Activated B cell treated with CpG ODN at 0.5 μM for 24 hours (primary cell): ENCODE measurements at regions of chr2 and their contacts with region 1.

Region 1: DNA sequence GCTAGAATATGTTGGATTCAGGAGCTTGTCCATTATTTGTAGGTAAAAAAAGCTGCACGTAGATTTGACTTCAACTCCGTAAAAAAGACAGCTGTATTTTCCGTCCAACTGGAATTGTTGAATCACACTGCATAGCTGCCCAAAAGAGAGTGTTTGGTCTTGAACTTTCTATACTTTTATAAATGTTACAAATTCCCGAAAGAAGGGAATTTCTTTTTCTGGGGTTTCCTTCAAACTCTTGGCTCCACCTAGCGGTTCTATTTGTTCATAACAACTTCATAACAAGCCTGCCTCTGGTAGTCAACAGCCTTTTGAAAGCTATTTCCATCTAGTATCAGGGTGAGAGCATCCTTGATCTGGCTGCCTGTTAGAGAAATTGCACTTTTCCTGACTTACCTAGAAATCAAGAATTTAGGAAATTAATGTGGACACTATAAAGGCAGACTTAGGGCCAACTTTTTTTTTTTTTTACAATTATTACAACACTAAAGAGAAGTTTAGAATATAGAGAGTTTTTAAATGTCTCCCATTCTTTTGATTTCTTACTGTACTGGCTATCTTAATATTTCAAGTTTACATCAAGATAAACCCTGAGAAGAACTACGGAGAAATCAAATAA is 48.1 kb downstream of the TMEM185B start:
- DNase-seq: no peak
- ATAC-seq: no peak
- H3K4me3 Mint-ChIP-seq: no peak overlapping the region
- H3K27ac Mint-ChIP-seq: peak overlapping the region; percentile 47
- H3K4me1 Mint-ChIP-seq: peaks cover 50% of the 10 kb centered on the region
- H3K27me3 Mint-ChIP-seq: no peaks in the 10 kb centered on the region
- CTCF ChIP-seq: peak; percentile 98

Region 2: GRCh38 chr2:119641562-119642258 is 533.4 kb before region 1 on chr2:
- CTCF ChIA-PET with region 1: interaction called, 10 read pairs
- POLR2A ChIA-PET with region 1: no interaction called
- intact Hi-C with region 1: loop called (anchors 1 kb)
- DNase-seq: peak; percentile 55
- ATAC-seq: peak; percentile 100
- H3K4me3 Mint-ChIP-seq: no peak overlapping the region
- H3K27ac Mint-ChIP-seq: no peak overlapping the region
- H3K4me1 Mint-ChIP-seq: peaks cover 4% of the 10 kb centered on the region
- H3K27me3 Mint-ChIP-seq: peaks cover 10% of the 10 kb centered on the region
- CTCF ChIP-seq: peak; percentile 90

Region 3: DNA sequence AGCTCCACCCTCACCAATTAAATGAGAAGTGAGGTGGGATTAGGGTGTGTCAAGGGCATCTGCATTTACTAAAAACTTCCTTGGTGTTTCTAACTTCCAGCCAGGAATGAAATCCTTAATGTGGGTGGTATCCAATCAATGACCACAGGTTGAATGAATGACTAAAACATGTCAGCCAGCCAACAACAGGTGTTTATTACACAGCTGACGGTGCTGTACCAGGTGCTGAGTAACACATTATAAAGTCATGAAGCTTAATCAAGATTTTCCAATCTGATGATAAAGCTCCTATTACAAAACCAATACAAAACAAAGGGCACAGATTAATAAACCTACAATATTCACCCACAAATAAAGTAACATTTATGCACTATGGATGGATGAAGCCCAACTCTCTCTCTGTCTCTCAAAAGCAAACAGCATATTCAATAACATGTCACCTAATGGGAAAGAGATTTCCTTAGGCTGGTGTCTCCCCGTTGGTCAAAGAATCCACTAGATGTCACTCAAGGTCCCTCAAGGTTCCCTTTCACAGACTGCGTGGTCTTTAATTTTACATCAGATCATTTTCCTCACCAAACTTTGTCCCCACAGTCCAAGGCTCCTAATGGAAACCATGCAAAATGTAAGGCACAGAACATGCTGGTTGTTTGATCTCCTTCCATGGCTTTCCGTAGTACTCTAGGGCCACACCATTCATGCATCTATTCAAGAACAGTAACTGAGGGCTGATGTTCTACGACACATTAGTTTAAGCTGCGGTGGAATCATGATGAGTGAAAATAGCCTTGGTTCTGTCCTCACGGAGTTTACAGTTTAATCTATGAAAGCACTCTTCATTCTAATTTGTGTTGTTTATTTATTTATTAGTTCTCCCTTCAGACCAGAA is 421.8 kb before region 1 on chr2:
- CTCF ChIA-PET with region 1: interaction called, 138 read pairs
- POLR2A ChIA-PET with region 1: interaction called, 12 read pairs
- intact Hi-C with region 1: loop called (anchors 1 kb)
- DNase-seq: no peak
- ATAC-seq: peak; percentile 47
- H3K4me3 Mint-ChIP-seq: no peak overlapping the region
- H3K27ac Mint-ChIP-seq: no peak overlapping the region
- H3K4me1 Mint-ChIP-seq: no peaks in the 10 kb centered on the region
- H3K27me3 Mint-ChIP-seq: no peaks in the 10 kb centered on the region
- CTCF ChIP-seq: peak; percentile 42

Region 4: DNA sequence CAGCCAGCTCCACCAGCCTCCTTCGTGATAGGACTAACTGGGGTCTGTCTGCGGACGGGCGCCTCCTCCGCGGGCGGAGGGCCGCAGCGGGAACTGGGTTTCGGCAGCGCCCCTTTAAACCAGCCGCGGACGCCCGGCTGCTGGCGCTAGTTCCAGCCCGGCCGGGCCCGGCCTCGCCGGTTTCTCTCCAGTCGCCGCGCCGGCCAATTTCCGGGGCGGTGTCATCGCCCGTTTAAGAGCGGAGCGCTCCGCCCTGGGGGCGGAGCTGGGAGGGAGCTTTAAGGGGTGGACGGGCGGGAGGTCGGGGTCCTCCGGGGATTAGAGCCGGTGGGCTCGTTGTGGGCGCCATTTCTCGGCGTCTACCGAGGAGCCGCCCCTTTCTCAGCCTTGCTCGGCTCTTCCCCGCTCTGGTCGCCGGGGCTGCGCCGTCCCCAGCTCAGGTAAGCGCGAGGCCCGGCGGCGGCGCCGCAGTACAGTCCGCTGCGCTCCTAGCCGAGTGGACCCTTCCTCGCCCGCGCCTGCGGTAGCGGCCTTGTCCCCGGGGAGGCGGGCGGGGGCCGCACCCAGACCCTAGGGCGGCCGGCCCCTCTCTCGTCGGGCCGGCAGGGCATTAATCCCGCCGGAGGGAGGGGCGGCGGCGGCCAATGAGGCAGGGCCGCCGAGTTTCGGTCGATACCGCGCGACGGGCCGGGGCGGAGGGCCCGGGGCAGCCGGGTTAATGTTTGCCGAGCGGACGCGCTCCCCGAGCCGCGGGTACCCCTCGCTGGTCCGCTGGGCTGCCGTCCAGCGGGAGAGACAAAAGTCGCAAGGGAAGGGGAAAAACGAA is 162.1 kb before region 1 on chr2 and contains the start of gene EPB41L5:
- CTCF ChIA-PET with region 1: interaction called, 5 read pairs
- POLR2A ChIA-PET with region 1: interaction called, 14 read pairs
- intact Hi-C with region 1: loop called (anchors 1 kb)
- DNase-seq: peak; percentile 77
- ATAC-seq: peak; percentile 87
- H3K4me3 Mint-ChIP-seq: peak within 1 kb of the TSS; percentile 87
- H3K27ac Mint-ChIP-seq: peak within 1 kb of the TSS; percentile 79
- H3K4me1 Mint-ChIP-seq: peaks cover 32% of the 10 kb centered on the region
- H3K27me3 Mint-ChIP-seq: no peaks in the 10 kb centered on the region
- CTCF ChIP-seq: no peak
- total RNA-seq, gene EPB41L5: 20.9 and 29.4 TPM in 2 replicates

Region 5: DNA sequence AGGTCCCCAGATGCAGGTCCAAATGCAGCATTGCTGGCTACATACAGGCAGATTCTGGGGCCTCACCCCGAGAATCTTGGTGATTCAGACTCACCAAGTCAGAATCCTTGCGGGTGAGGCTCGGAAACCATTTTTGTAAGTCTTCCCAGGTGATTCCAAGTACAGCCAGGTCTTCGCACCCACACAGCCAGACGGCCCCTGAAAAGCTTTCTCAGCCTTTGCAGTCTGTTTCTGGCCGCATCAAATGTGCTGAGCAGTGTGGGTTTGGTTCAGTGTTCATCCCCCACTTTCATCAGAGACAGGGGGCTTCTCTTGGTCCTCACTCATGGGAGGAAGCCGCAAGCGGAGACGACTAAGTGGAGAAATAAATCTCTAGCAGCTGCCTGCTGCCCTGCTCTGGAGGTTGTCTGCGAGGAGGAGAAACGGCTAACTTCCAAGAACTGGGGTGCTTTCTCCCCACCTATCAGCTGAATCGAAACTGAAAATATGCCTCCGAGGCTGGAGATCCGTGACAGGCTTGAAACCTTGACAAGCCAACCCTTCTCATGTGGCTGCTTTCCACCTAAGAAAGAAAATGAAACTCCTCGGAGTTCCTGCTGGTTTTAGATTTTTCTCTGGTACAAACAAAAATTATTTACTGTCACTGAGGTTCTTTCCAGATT is 57.0 kb after region 1 on chr2:
- CTCF ChIA-PET with region 1: interaction called, 6 read pairs
- POLR2A ChIA-PET with region 1: interaction called, 16 read pairs
- intact Hi-C with region 1: loop called (anchors 2 kb)
- DNase-seq: peak; percentile 31
- ATAC-seq: peak; percentile 90
- H3K4me3 Mint-ChIP-seq: peak overlapping the region; percentile 89
- H3K27ac Mint-ChIP-seq: peak overlapping the region; percentile 90
- H3K4me1 Mint-ChIP-seq: peaks cover 43% of the 10 kb centered on the region
- H3K27me3 Mint-ChIP-seq: no peaks in the 10 kb centered on the region
- CTCF ChIP-seq: no peak

Region 6: GRCh38 chr2:121561617-121562268 is 1386.7 kb after region 1 on chr2:
- CTCF ChIA-PET with region 1: no interaction called
- POLR2A ChIA-PET with region 1: no interaction called
- intact Hi-C with region 1: no loop called
- DNase-seq: no peak
- ATAC-seq: no peak
- H3K4me3 Mint-ChIP-seq: no peak overlapping the region
- H3K27ac Mint-ChIP-seq: no peak overlapping the region
- H3K4me1 Mint-ChIP-seq: peaks cover 15% of the 10 kb centered on the region
- H3K27me3 Mint-ChIP-seq: no peaks in the 10 kb centered on the region
- CTCF ChIP-seq: no peak